ENCODE measurements at regions of chr17 and their contacts with region 1.

Region 1: DNA sequence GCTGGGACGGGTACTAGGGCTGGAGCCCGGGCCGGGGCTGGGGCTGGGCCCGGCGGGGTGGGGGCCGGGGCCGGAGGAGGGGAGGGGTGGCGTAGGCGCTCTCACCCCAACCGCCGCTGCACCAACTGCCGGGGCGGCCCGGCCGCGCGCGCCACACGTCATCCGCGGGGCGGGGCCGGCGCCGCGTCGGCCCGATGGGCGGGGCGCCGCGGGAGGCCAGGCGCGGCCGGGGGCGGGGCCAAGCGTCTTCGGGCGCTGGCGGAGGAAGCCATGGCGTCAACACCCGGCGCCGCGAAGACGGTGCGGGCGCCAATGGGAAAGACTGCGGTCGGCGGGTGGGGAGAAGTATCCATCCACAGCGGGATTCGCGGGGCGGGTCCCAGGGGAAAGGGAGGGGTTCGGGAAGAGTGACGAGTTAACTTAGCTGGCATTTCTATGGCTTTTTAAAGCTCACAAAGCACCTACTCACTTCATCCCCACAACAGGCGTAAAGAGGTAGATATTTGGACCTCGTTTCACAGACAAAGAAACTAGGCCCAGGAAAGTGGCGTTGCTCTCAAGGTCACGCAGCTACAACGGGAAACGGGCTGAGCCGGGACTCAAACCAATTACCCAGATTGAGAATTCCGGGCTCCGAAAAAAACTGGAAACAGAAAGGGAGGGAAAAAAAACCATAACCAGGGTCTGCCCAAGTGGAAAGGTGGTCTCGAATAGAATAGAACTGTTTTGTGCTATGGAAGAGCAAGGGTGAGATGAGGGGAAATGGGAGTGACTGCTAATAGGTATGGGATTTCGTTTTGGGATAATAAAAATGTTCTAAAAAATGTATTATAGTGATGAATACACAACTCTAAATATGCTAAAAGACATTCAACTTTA is at the start of gene SPAG9:
- DNase-seq: peak; percentile 95
- ATAC-seq: peak; percentile 62
- H3K4me3 Mint-ChIP-seq: peak within 1 kb of the TSS; percentile 89
- H3K27ac Mint-ChIP-seq: peak within 1 kb of the TSS; percentile 100
- H3K4me1 Mint-ChIP-seq: peaks cover 51% of the 10 kb centered on the region
- H3K27me3 Mint-ChIP-seq: no peaks in the 10 kb centered on the region
- total RNA-seq, gene SPAG9: 48.0 to 88.2 TPM

Region 2: DNA sequence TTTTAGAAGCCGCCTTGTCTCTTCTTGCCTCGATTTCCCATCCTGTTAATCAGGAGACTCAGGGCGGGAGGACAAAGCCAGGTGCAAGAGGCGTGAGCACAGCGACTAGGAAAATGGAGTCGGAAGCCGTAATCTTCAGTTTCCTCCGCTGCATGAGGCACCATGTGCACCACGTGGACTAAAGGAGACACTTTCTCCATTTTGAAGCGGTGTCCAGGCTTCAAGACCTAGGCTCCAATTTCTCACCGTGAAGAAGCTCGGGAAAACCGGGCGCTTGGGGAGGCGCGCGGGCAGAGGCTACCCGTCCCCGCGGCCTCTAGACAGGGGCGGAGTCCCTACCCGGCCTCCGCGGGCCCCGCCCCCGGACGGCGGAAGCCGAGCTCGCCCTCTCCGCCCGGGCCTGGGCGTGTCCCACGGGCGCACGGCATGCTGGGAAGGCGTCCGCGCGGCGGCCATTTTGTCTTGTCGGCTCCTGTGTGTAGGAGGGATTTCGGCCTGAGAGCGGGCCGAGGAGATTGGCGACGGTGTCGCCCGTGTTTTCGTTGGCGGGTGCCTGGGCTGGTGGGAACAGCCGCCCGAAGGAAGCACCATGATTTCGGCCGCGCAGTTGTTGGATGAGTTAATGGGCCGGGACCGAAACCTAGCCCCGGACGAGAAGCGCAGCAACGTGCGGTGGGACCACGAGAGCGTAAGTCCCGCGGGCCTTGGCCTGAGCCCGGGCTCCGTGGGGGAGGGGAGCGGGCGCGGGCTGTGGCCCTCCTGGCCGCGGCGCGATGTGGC is 401.6 kb before region 1 on chr17 and contains the start of gene LUC7L3:
- CTCF ChIA-PET with region 1: no interaction called
- POLR2A ChIA-PET with region 1: no interaction called
- intact Hi-C with region 1: loop called (anchors 2 to 10 kb)
- DNase-seq: peak; percentile 97
- ATAC-seq: peak; percentile 89
- H3K4me3 Mint-ChIP-seq: peak within 1 kb of the TSS; percentile 87
- H3K27ac Mint-ChIP-seq: peak within 1 kb of the TSS; percentile 99
- H3K4me1 Mint-ChIP-seq: peaks cover 22% of the 10 kb centered on the region
- H3K27me3 Mint-ChIP-seq: no peaks in the 10 kb centered on the region
- total RNA-seq, gene LUC7L3: 112 to 120 TPM

Region 3: GRCh38 chr17:51000835-51001638 is 119.9 kb before region 1 on chr17:
- CTCF ChIA-PET with region 1: interaction called, 5 read pairs
- POLR2A ChIA-PET with region 1: no interaction called
- intact Hi-C with region 1: loop called (anchors 1 kb)
- DNase-seq: no peak
- ATAC-seq: peak; percentile 85
- H3K4me3 Mint-ChIP-seq: no peak overlapping the region
- H3K27ac Mint-ChIP-seq: no peak overlapping the region
- H3K4me1 Mint-ChIP-seq: peaks cover 6% of the 10 kb centered on the region
- H3K27me3 Mint-ChIP-seq: no peaks in the 10 kb centered on the region

Region 4: GRCh38 chr17:51071556-51071955 is 49.4 kb before region 1 on chr17:
- CTCF ChIA-PET with region 1: no interaction called
- POLR2A ChIA-PET with region 1: no interaction called
- intact Hi-C with region 1: no loop called
- DNase-seq: no peak
- ATAC-seq: no peak
- H3K4me3 Mint-ChIP-seq: no peak overlapping the region
- H3K27ac Mint-ChIP-seq: no peak overlapping the region
- H3K4me1 Mint-ChIP-seq: peaks cover 14% of the 10 kb centered on the region
- H3K27me3 Mint-ChIP-seq: no peaks in the 10 kb centered on the region

Region 5: GRCh38 chr17:51147650-51148049 is 26.7 kb after region 1 on chr17:
- CTCF ChIA-PET with region 1: interaction called, 9 read pairs
- POLR2A ChIA-PET with region 1: interaction called, 3 read pairs
- intact Hi-C with region 1: loop called in 1 of 2 experiments (anchors 1 kb)
- DNase-seq: peak; percentile 25
- ATAC-seq: peak; percentile 38
- H3K4me3 Mint-ChIP-seq: no peak overlapping the region
- H3K27ac Mint-ChIP-seq: no peak overlapping the region
- H3K4me1 Mint-ChIP-seq: peaks cover 20% of the 10 kb centered on the region
- H3K27me3 Mint-ChIP-seq: no peaks in the 10 kb centered on the region

Region 6: GRCh38 chr17:51260125-51260880 is 139.3 kb after region 1 on chr17 and contains the start of gene UTP18:
- CTCF ChIA-PET with region 1: no interaction called
- POLR2A ChIA-PET with region 1: no interaction called
- intact Hi-C with region 1: loop called (anchors 1 kb)
- DNase-seq: peak; percentile 98
- ATAC-seq: peak; percentile 84
- H3K4me3 Mint-ChIP-seq: peak within 1 kb of the TSS; percentile 84
- H3K27ac Mint-ChIP-seq: peak within 1 kb of the TSS; percentile 97
- H3K4me1 Mint-ChIP-seq: peaks cover 61% of the 10 kb centered on the region
- H3K27me3 Mint-ChIP-seq: no peaks in the 10 kb centered on the region
- total RNA-seq, gene UTP18: 49.3 to 74.0 TPM

Measured in activated CD4-positive, alpha-beta T cell treated with anti-CD3 and anti-CD28 coated beads for 36 hours (primary cell).